Breast epithelium (tissue), 4 donors: ENCODE measurements at regions of chr9 and their contacts with region 1.

Region 1: GRCh38 chr9:134738869-134739659 is 97.5 kb downstream of the COL5A1 start:
- DNase-seq: peak; percentile 46 to 82
- H3K4me3 ChIP-seq: no peak overlapping the region
- H3K27ac ChIP-seq: no peak overlapping the region
- H3K4me1 ChIP-seq: no peaks in the 10 kb centered on the region
- H3K27me3 ChIP-seq: no peaks in the 10 kb centered on the region
- CTCF ChIP-seq: peak; percentile 83 to 93 (median 88)
- POLR2A ChIP-seq: no peak

Region 2: DNA sequence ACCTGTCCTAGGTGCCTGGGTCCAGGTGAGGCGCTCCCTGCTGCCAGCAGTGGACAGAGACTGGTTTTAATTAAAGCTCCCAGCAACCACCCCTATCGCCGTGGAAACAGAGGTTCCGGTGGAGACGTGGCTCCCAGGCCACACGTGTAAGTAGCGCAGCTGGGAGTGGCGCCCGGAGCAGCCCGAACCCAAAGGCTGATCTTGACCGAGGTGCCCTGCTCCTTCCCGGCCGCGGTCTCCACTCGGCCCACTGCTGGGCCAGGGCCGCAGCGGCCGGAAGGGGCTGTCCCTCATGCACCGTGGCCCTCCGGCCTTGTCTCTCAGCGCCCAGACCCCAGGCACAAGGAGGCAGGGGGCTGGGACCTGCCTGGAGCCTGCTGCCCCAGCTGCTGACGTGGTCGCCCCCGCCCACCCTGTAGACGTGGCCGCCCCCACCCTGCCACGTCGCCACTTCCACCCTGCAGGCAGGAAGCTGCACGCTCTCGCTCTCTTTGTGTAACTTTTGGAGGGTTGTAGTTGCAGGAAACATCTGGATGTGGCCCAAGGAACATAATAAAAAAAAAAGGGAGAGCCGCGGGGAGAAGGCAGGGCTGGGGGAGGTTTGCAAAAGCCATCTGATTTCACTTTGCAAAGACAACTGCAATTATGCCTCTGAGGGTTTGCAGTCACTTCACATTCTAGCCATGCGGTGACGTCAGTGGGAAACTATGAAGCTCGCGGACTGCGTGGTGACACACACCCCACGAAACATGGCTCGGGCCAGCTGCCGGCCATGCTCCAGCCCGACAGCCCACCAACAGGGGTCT is 282.9 kb before region 1 on chr9:
- intact Hi-C with region 1: loop called (anchors 10 kb)
- DNase-seq: peak; percentile 81 to 84
- H3K4me3 ChIP-seq: peak overlapping the region; percentile 33 to 74 (median 46)
- H3K27ac ChIP-seq: peak overlapping the region; percentile 89 to 97
- H3K4me1 ChIP-seq: peaks cover 7 to 15% of the 10 kb centered on the region in 2 donors
- H3K27me3 ChIP-seq: no peaks in the 10 kb centered on the region
- CTCF ChIP-seq: no peak
- POLR2A ChIP-seq: no peak

Region 3: GRCh38 chr9:134698587-134699342 is 40.3 kb before region 1 on chr9:
- intact Hi-C with region 1: loop called (anchors 2 kb)
- DNase-seq: peak; percentile 22 to 69
- H3K4me3 ChIP-seq: no peak overlapping the region
- H3K27ac ChIP-seq: no peak overlapping the region
- H3K4me1 ChIP-seq: no peaks in the 10 kb centered on the region
- H3K27me3 ChIP-seq: no peaks in the 10 kb centered on the region
- CTCF ChIP-seq: peak; percentile 42 to 80 (median 79)
- POLR2A ChIP-seq: no peak

Region 4: DNA sequence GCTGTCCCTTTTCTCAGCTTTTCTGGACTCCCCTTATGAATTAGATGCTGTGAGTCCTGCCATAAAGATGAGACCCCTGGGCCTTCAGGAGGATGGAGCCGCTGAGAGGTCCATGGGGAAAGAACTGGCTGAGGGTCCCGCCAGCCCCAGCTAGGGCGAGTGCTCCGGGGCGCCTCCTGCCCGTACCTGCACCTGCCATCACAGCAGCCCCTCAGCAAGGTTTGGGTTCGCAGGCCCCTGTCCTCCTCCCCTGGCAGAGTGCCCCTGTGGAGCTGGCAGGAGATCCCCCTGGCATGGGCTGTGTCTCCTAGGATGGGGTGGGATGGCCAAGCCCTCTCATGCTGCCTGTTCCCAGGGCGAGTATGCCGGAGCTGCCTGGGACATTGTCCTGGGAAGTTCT is 33.3 kb before region 1 on chr9:
- intact Hi-C with region 1: loop called (anchors 1 kb)
- DNase-seq: no peak
- H3K4me3 ChIP-seq: no peak overlapping the region
- H3K27ac ChIP-seq: peak overlapping the region in 1 of 2 donors; percentile 32
- H3K4me1 ChIP-seq: no peaks in the 10 kb centered on the region
- H3K27me3 ChIP-seq: peaks cover 0 to 6% of the 10 kb centered on the region in 2 donors
- CTCF ChIP-seq: no peak
- POLR2A ChIP-seq: no peak

Region 5: GRCh38 chr9:134716071-134716470 is 23.0 kb before region 1 on chr9:
- intact Hi-C with region 1: no loop called
- DNase-seq: no peak
- H3K4me3 ChIP-seq: no peak overlapping the region
- H3K27ac ChIP-seq: no peak overlapping the region
- H3K4me1 ChIP-seq: no peaks in the 10 kb centered on the region
- H3K27me3 ChIP-seq: no peaks in the 10 kb centered on the region
- CTCF ChIP-seq: no peak
- POLR2A ChIP-seq: no peak